T-cell (primary cell): ENCODE measurements at regions of chrX and their contacts with region 1.

Region 1: DNA sequence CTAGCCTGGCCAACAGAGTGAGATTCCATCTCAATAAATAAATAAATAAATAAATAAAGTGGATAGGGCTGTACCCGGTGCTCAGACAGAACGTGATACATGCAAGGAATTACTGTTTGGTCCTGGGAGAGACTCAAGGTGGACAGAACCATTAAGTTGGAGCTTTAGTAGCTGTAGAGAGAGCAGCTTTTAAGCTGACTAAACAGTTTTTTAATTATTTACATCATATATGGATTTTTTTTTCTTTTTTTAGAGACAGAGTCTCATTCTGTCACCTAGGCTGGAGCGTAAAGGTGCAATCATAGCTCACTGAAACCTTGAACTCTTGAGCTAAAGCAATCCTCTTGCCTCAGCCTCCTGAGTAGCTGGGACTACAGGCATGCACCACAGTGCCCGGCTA is 92.5 kb upstream of the ATP6AP2 start:
- DNase-seq: no peak
- ATAC-seq: no peak
- H3K4me3 ChIP-seq: no peak overlapping the region
- H3K4me3 Mint-ChIP-seq: no peak overlapping the region
- H3K27ac ChIP-seq: no peak overlapping the region
- H3K27ac Mint-ChIP-seq: no peak overlapping the region
- H3K4me1 ChIP-seq: peaks cover 0 to 4% of the 10 kb centered on the region in 2 experiments
- H3K4me1 Mint-ChIP-seq: peaks cover 0 to 13% (median 2%) of the 10 kb centered on the region in 3 donors
- H3K27me3 ChIP-seq: no peaks in the 10 kb centered on the region
- H3K27me3 Mint-ChIP-seq: peaks cover 0 to 10% of the 10 kb centered on the region in 2 donors

Region 2: GRCh38 chrX:39898167-39898566 is 590.1 kb before region 1 on chrX:
- CTCF ChIA-PET with region 1: no interaction called
- POLR2A ChIA-PET with region 1: interaction called in 1 of 2 experiments, 10 read pairs
- DNase-seq: no peak
- ATAC-seq: no peak
- H3K4me3 ChIP-seq: no peak overlapping the region
- H3K4me3 Mint-ChIP-seq: no peak overlapping the region
- H3K27ac ChIP-seq: no peak overlapping the region
- H3K27ac Mint-ChIP-seq: no peak overlapping the region
- H3K4me1 ChIP-seq: no peaks in the 10 kb centered on the region
- H3K4me1 Mint-ChIP-seq: no peaks in the 10 kb centered on the region
- H3K27me3 ChIP-seq: peaks cover 0 to 4% of the 10 kb centered on the region in 2 experiments
- H3K27me3 Mint-ChIP-seq: peaks cover 0 to 9% of the 10 kb centered on the region in 2 donors

Region 3: GRCh38 chrX:40504801-40505605 is 16.7 kb after region 1 on chrX:
- CTCF ChIA-PET with region 1: no interaction called
- POLR2A ChIA-PET with region 1: no interaction called
- DNase-seq: no peak
- ATAC-seq: no peak
- H3K4me3 ChIP-seq: no peak overlapping the region
- H3K4me3 Mint-ChIP-seq: no peak overlapping the region
- H3K27ac ChIP-seq: no peak overlapping the region
- H3K27ac Mint-ChIP-seq: no peak overlapping the region
- H3K4me1 ChIP-seq: no peaks in the 10 kb centered on the region
- H3K4me1 Mint-ChIP-seq: no peaks in the 10 kb centered on the region
- H3K27me3 ChIP-seq: no peaks in the 10 kb centered on the region
- H3K27me3 Mint-ChIP-seq: peaks cover 0 to 27% of the 10 kb centered on the region in 2 donors